ENCODE measurements at regions of chr2 and their contacts with region 1.

Region 1: GRCh38 chr2:120174963-120175581 is 48.1 kb downstream of the TMEM185B start:
- DNase-seq: no peak
- ATAC-seq: no peak
- H3K4me3 Mint-ChIP-seq: no peak overlapping the region
- H3K27ac Mint-ChIP-seq: peak overlapping the region; percentile 61
- H3K4me1 Mint-ChIP-seq: peaks cover 44% of the 10 kb centered on the region
- H3K27me3 Mint-ChIP-seq: no peaks in the 10 kb centered on the region

Region 2: DNA sequence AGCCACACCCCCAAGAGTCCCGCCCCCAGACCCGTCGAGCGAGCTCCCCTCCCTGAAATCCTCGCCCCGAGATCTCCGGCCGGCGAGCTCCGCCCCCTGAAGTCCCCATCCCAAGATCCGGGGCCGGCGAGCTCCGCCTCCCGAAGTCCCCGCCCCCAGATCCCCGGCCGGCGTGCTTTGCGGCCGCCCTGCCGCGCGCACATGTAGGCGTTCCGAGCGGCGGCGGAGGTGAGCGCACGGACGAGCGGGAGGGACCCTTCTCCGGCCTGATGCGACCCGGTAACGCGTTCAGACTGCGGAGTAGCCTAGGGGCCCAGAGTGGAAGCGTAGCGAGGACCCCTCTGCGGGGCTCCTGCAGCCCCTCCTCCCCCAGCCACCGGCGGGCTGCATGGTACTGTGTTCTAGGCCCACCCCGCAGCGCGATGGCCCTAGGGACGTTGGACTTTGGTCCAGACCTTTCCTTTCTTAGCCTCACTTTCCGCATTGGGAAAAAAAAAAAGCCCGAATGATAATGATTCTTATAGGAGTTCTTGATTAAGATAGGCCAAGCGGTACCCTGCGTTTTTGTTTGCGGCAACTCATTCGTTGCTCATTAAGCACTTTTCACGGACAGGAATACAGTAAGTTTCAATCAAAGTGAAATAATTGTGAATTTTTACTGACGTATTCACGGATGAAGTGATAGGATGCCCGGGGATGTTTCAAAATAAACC is 495.9 kb before region 1 on chr2 and contains the start of gene TMEM177:
- CTCF ChIA-PET with region 1: interaction called, 11 read pairs
- POLR2A ChIA-PET with region 1: interaction called, 10 read pairs
- intact Hi-C with region 1: loop called in 1 of 2 experiments (anchors 1 kb)
- DNase-seq: peak; percentile 94
- ATAC-seq: peak; percentile 93
- H3K4me3 Mint-ChIP-seq: peak within 1 kb of the TSS; percentile 87
- H3K27ac Mint-ChIP-seq: peak within 1 kb of the TSS; percentile 88
- H3K4me1 Mint-ChIP-seq: peaks cover 33% of the 10 kb centered on the region
- H3K27me3 Mint-ChIP-seq: no peaks in the 10 kb centered on the region
- total RNA-seq, gene TMEM177: 13.6 to 15.8 TPM

Region 3: DNA sequence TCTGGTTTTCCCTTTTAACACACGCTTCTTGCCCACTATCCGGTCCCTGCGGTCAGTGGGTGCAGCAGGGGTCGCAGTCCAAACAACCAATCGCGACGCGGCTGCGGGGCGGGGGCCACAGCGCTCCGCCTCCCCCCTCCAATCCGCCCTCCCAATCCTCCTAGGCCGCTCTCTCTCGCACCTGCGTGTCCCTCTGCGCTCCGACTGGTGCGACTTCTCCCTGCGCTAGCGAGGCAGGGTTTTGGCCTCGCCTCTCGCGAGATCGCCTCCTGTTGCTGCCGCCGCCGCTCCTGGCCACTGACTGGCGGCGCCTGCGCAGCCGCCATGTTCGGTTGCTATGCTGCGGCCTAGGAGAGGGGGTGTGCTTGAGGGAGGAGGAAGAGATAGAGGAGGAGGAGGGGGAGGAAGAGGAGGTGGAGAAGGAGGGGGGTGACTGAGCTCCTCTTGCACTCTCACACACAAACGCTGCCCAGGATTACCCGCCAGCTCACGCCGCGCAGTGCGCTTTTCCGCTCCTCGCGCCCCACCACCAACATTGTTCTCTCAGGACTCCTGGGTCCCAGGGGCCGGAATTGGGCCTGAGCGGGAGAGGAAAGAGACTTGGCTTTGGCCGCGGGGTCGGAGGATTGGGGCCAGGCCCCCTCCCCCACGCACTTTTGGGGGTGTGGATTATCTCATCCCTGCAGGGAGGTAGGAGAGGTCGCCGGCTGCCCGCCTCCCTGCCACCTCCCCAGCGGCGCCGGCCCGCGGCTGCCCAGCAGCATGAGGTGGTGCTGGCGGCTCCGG is 415.4 kb before region 1 on chr2 and contains the start of gene PTPN4:
- CTCF ChIA-PET with region 1: interaction called, 13 read pairs
- POLR2A ChIA-PET with region 1: no interaction called
- intact Hi-C with region 1: loop called in 1 of 2 experiments (anchors 1 kb)
- DNase-seq: peak; percentile 98
- ATAC-seq: peak; percentile 93
- H3K4me3 Mint-ChIP-seq: peak within 1 kb of the TSS; percentile 72
- H3K27ac Mint-ChIP-seq: peak within 1 kb of the TSS; percentile 93
- H3K4me1 Mint-ChIP-seq: peaks cover 43% of the 10 kb centered on the region
- H3K27me3 Mint-ChIP-seq: no peaks in the 10 kb centered on the region
- total RNA-seq, gene PTPN4: 32.4 to 38.0 TPM

Region 4: GRCh38 chr2:120077896-120078295 is 97.2 kb before region 1 on chr2:
- CTCF ChIA-PET with region 1: interaction called, 11 read pairs
- POLR2A ChIA-PET with region 1: no interaction called
- intact Hi-C with region 1: no loop called
- DNase-seq: peak; percentile 10
- ATAC-seq: no peak
- H3K4me3 Mint-ChIP-seq: no peak overlapping the region
- H3K27ac Mint-ChIP-seq: no peak overlapping the region
- H3K4me1 Mint-ChIP-seq: no peaks in the 10 kb centered on the region
- H3K27me3 Mint-ChIP-seq: no peaks in the 10 kb centered on the region

Region 5: DNA sequence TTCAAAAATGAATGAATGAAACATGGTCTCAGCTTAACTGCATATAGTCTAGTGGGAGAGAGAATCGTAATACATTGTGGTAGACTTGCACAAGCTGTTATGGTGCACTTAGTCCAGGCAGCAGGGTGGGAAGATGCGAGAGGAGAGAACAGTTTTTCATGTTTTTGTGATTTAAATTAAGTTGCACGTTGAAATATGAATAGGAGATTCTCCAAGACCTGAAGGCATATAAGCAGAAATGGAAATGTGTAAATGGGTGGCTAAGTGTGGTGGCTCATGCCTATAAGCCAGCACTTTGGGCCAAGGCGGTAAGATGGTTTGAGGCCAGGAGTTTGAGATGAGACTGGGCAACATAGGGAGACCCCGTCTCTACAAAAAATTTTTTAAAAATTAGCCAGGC is 12.4 kb before region 1 on chr2:
- CTCF ChIA-PET with region 1: interaction called, 25 read pairs
- POLR2A ChIA-PET with region 1: interaction called, 4 read pairs
- intact Hi-C with region 1: no loop called
- DNase-seq: no peak
- ATAC-seq: no peak
- H3K4me3 Mint-ChIP-seq: no peak overlapping the region
- H3K27ac Mint-ChIP-seq: no peak overlapping the region
- H3K4me1 Mint-ChIP-seq: no peaks in the 10 kb centered on the region
- H3K27me3 Mint-ChIP-seq: no peaks in the 10 kb centered on the region

Region 6: DNA sequence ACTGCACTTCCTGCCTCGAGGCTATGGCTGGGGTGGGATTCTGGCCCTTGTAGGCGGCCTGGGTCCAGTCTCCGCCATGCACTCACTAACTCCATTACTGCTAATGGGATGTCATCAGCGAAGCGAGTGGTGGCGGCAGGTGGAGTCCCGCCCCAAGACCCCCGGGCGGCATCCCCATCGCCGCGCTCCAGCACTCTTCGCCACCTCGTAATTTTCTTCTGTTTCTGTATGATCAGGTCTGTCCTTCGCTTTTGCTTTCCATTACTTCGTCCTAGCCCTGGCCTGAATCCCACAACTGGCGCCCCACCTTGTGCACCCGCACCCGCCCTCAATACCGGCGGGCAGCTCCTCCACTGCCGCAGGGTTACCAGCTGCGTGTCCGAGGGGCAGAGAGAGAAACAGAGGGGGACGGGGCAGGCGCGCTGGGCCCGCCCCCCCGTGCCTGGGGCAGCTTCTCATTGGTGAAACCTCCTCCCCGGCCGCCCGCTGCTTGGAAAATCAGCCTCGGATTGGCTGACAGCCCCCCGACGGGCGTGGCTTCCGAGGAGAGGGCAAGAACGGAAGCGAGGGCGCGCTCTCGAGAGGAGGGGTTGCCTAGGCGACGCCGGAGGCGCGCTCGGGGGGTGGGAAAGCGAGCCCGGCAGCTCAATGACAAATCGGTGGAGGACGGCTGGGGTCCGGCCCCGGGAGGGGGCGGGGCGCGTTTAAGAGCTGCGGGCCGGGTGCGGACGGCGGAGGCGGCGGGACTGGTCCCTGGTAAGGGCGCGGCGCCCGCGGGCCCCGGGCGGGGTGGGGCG is 77.4 kb after region 1 on chr2 and contains the start of gene RALB:
- CTCF ChIA-PET with region 1: interaction called, 5 read pairs
- POLR2A ChIA-PET with region 1: no interaction called
- intact Hi-C with region 1: loop called in 1 of 2 experiments (anchors 1 kb)
- DNase-seq: peak; percentile 100
- ATAC-seq: peak; percentile 95
- H3K4me3 Mint-ChIP-seq: peak within 1 kb of the TSS; percentile 92
- H3K27ac Mint-ChIP-seq: peak within 1 kb of the TSS; percentile 86
- H3K4me1 Mint-ChIP-seq: peaks cover 41% of the 10 kb centered on the region
- H3K27me3 Mint-ChIP-seq: peaks cover 6% of the 10 kb centered on the region
- total RNA-seq, gene RALB: 34.0 to 34.3 TPM

Region 7: DNA sequence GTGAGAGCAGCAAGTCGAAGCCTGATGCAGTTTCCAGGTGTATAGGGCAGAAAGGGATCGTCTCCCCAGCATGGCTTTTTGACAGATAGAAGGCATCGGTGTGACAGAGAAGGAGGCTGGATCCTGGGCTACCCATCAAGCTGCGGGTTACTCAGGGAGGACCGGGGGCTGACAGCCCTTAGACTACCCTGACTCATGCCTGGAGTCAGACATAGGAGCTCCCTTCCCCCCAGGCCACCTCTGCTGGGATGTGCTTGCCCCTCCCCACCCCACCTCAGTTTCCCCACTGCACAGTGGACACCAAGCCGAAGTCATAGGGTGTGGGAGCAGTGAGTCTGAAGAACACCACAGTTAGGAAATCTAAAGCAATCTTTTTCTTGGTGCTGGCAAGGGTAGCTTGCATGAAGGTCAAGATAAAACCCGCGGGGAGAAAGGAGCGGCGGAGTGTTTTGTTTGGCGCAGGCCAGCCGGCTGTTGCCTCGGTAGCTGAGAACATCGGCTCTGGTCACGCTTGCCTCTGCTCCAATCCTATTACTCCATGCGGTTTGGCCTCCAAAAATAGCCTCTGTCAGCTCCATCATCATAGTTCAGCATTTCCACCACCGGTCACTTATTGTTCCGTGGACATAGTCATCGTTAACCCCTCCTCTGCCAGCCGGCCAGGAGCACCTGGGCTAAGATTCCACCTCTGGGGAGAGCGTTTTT is 391.4 kb after region 1 on chr2:
- CTCF ChIA-PET with region 1: no interaction called
- POLR2A ChIA-PET with region 1: no interaction called
- intact Hi-C with region 1: no loop called
- DNase-seq: no peak
- ATAC-seq: no peak
- H3K4me3 Mint-ChIP-seq: no peak overlapping the region
- H3K27ac Mint-ChIP-seq: no peak overlapping the region
- H3K4me1 Mint-ChIP-seq: no peaks in the 10 kb centered on the region
- H3K27me3 Mint-ChIP-seq: peaks cover 2% of the 10 kb centered on the region

Region 8: GRCh38 chr2:121748202-121748601 is 1573.1 kb after region 1 on chr2:
- CTCF ChIA-PET with region 1: no interaction called
- POLR2A ChIA-PET with region 1: no interaction called
- intact Hi-C with region 1: no loop called
- DNase-seq: no peak
- ATAC-seq: no peak
- H3K4me3 Mint-ChIP-seq: no peak overlapping the region
- H3K27ac Mint-ChIP-seq: no peak overlapping the region
- H3K4me1 Mint-ChIP-seq: peaks cover 12% of the 10 kb centered on the region
- H3K27me3 Mint-ChIP-seq: no peaks in the 10 kb centered on the region